HepG2 (cell line): ENCODE measurements at regions of chr18 and their contacts with region 1.

Region 1: DNA sequence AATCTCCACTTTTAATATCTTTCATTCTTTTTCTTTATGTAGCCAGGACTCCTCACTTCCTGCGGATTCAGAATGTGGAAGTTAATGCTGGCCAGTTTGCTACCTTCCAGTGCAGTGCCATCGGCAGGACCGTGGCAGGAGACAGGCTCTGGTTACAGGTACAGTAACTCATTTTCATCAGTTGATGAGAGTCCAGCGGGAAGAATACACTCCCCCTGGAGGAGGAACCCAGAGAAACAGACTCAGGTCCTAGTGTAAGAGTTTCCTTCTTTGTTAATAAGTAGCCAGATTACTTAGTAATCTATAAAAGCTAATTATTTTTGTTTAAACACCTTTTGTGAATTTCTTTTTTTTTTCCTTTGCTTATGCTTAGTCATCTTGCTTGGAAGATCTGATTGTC is 359.4 kb downstream of the PTPRM start:
- DNase-seq: peak; percentile 53
- ATAC-seq: peak; percentile 68
- H3K4me3 ChIP-seq: no peak overlapping the region
- H3K27ac ChIP-seq: no peak overlapping the region
- H3K4me1 ChIP-seq: peaks cover 42% of the 10 kb centered on the region
- H3K27me3 ChIP-seq: no peaks in the 10 kb centered on the region
- CTCF ChIP-seq: peak; percentile 33; the same call in 1 of the 2 replicates
- EP300 ChIP-seq: no peak
- POLR2A ChIP-seq: no peak
- RAD21 ChIP-seq: no peak

Region 2: DNA sequence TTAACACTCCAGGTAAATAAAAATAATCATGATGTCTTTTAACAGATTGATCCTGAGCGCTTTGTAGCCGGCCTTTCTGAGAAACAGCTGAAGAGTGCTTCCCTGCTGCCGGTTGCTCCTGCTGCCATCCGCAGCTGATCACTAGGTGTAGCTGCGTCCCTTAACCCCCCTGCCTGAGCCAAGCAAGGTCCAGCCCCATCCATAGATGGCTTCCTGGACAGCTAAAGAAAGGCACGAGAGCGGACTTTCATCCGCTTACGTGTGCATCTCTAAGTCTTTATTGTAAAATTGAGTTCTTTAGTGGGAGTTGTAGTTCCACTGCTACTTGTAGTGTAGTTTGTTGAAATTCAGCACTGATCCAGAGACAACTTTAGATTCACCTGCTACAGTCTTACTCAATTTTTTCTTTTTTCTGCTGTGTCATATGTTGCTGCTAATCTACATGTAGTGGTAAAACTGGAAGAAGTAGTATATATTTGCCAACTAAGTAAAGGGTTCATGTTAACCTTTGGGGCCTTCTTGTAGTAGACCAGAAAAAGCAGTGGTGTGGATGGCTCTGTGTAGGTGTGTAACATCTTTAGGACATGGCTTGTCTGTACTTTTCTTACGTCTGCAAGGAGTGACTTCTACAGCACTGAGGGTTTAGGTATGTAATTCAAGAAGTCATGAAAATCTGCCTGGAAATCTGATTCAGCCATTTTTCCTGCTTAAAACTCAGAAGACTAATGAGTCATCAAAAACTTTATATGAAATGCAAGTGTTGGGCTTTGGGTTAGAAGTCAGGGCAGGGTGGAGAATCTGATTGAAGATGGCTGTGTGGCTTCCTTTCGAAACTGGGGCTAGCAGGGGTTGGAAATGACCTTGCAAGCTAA is 351.1 kb before region 1 on chr18:
- CTCF ChIA-PET with region 1: no interaction called
- POLR2A ChIA-PET with region 1: no interaction called
- in situ Hi-C with region 1: no loop called
- intact Hi-C with region 1: loop called (anchors 10 kb)
- DNase-seq: peak; percentile 52
- ATAC-seq: peak; percentile 98
- H3K4me3 ChIP-seq: peak overlapping the region; percentile 5 to 59 (median 52)
- H3K27ac ChIP-seq: peak overlapping the region; percentile 78
- H3K4me1 ChIP-seq: peaks cover 57% of the 10 kb centered on the region
- H3K27me3 ChIP-seq: no peaks in the 10 kb centered on the region
- CTCF ChIP-seq: peak; percentile 73
- EP300 ChIP-seq: no peak
- POLR2A ChIP-seq: peak in 1 of 2 experiments; percentile 33; a peak in 1 of 4 replicates
- RAD21 ChIP-seq: no peak

Region 3: DNA sequence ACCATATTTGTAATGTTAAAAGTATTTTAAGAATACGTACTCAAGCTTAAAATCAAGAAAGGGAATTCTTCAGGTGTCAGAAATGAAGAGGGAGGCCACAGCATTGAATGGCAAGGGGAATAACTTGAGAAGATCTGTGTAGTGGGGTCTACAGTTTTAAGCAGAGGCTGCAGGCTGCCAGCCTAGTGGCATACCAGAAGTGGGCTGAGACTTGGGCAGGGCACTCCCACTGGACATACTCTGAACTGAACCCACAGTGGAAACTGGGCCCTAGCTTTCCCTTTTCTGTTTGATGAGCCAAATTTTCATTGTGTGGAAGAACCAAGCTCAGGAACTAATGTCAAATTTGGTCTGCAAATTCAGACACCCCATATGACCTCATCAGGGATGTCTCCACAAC is 120.6 kb before region 1 on chr18:
- CTCF ChIA-PET with region 1: no interaction called
- POLR2A ChIA-PET with region 1: no interaction called
- in situ Hi-C with region 1: no loop called
- intact Hi-C with region 1: loop called (anchors 10 kb)
- DNase-seq: no peak
- ATAC-seq: no peak
- H3K4me3 ChIP-seq: no peak overlapping the region
- H3K27ac ChIP-seq: no peak overlapping the region
- H3K4me1 ChIP-seq: peaks cover 58% of the 10 kb centered on the region
- H3K27me3 ChIP-seq: no peaks in the 10 kb centered on the region
- CTCF ChIP-seq: no peak
- EP300 ChIP-seq: no peak
- POLR2A ChIP-seq: no peak
- RAD21 ChIP-seq: no peak

Region 4: GRCh38 chr18:7872569-7872968 is 54.0 kb before region 1 on chr18:
- CTCF ChIA-PET with region 1: no interaction called
- POLR2A ChIA-PET with region 1: no interaction called
- in situ Hi-C with region 1: no loop called
- intact Hi-C with region 1: no loop called
- DNase-seq: peak; percentile 87
- ATAC-seq: peak; percentile 86
- H3K4me3 ChIP-seq: no peak overlapping the region
- H3K27ac ChIP-seq: no peak overlapping the region
- H3K4me1 ChIP-seq: peaks cover 41% of the 10 kb centered on the region
- H3K27me3 ChIP-seq: no peaks in the 10 kb centered on the region
- CTCF ChIP-seq: peak; percentile 56
- EP300 ChIP-seq: peak in 1 of 2 experiments; percentile 57; a peak in 2 of 4 replicates
- POLR2A ChIP-seq: no peak
- RAD21 ChIP-seq: peak; percentile 46; the same call in 1 of the 2 replicates